ENCODE measurements at regions of chr1 and their contacts with region 1.

Region 1: GRCh38 chr1:156465747-156466365 is 34.7 kb downstream of the MEF2D start:
- DNase-seq: no peak
- ATAC-seq: peak in 2 of 4 donors; percentile 6 to 17
- H3K4me3 ChIP-seq: no peak overlapping the region
- H3K27ac ChIP-seq: no peak overlapping the region
- H3K4me1 ChIP-seq: peaks cover 0 to 4% (median under 1%) of the 10 kb centered on the region in 4 donors
- H3K27me3 ChIP-seq: no peaks in the 10 kb centered on the region
- CTCF ChIP-seq: peak in 3 of 4 donors; percentile 6 to 17 (median 10)
- POLR2A ChIP-seq: no peak

Region 2: GRCh38 chr1:156383023-156383422 is 82.8 kb before region 1 on chr1:
- intact Hi-C with region 1: no loop called
- DNase-seq: peak; percentile 63 to 69 (median 66)
- ATAC-seq: peak; percentile 86 to 92 (median 88)
- H3K4me3 ChIP-seq: no peak overlapping the region
- H3K27ac ChIP-seq: no peak overlapping the region
- H3K4me1 ChIP-seq: no peaks in the 10 kb centered on the region
- H3K27me3 ChIP-seq: no peaks in the 10 kb centered on the region
- CTCF ChIP-seq: peak; percentile 67 to 82 (median 78)
- POLR2A ChIP-seq: no peak

Region 3: GRCh38 chr1:156510709-156511108 is 44.9 kb after region 1 on chr1:
- intact Hi-C with region 1: no loop called
- DNase-seq: no peak
- ATAC-seq: peak in 2 of 4 donors; percentile 19 to 31
- H3K4me3 ChIP-seq: no peak overlapping the region
- H3K27ac ChIP-seq: no peak overlapping the region
- H3K4me1 ChIP-seq: no peaks in the 10 kb centered on the region
- H3K27me3 ChIP-seq: no peaks in the 10 kb centered on the region
- CTCF ChIP-seq: no peak
- POLR2A ChIP-seq: no peak

Region 4: GRCh38 chr1:156601122-156601830 is 135.4 kb after region 1 on chr1 and contains the start of gene GPATCH4:
- intact Hi-C with region 1: loop called in 1 of 2 experiments (anchors 10 kb)
- DNase-seq: peak; percentile 70 to 82 (median 77)
- ATAC-seq: peak; percentile 85 to 94 (median 92)
- H3K4me3 ChIP-seq: peak within 1 kb of the TSS; percentile 59 to 88 (median 84)
- H3K27ac ChIP-seq: peak within 1 kb of the TSS in 2 of 3 donors; percentile 19 to 43
- H3K4me1 ChIP-seq: peaks cover 0 to 17% (median 3%) of the 10 kb centered on the region in 4 donors
- H3K27me3 ChIP-seq: no peaks in the 10 kb centered on the region
- CTCF ChIP-seq: no peak
- POLR2A ChIP-seq: peak; percentile 63
- total RNA-seq, gene GPATCH4: 7.0 to 25.3 (median 12.4) TPM

Region 5: GRCh38 chr1:157595356-157595755 is 1129.5 kb after region 1 on chr1:
- intact Hi-C with region 1: no loop called
- DNase-seq: no peak
- ATAC-seq: no peak
- H3K4me3 ChIP-seq: no peak overlapping the region
- H3K27ac ChIP-seq: no peak overlapping the region
- H3K4me1 ChIP-seq: no peaks in the 10 kb centered on the region
- H3K27me3 ChIP-seq: no peaks in the 10 kb centered on the region
- CTCF ChIP-seq: no peak
- POLR2A ChIP-seq: no peak